ENCODE measurements at regions of chr11 and their contacts with region 1.

Region 1: GRCh38 chr11:18321980-18322711 is at the starts of genes GTF2H1 and HPS5:
- DNase-seq: peak; percentile 84 to 100 (median 97)
- ATAC-seq: peak; percentile 87 to 90
- H3K4me3 Mint-ChIP-seq: peak within 1 kb of the TSS; percentile 93 to 100 (median 99)
- H3K27ac Mint-ChIP-seq: peak within 1 kb of the TSS; percentile 98 to 100 (median 100)
- H3K4me1 Mint-ChIP-seq: peaks cover 37 to 85% (median 79%) of the 10 kb centered on the region in 4 donors
- H3K27me3 Mint-ChIP-seq: no peaks in the 10 kb centered on the region
- polyA plus RNA-seq, gene GTF2H1: 29.0 to 34.3 (median 29.0) TPM
- polyA plus RNA-seq, gene HPS5: 11.6 to 12.2 (median 11.7) TPM

Region 2: DNA sequence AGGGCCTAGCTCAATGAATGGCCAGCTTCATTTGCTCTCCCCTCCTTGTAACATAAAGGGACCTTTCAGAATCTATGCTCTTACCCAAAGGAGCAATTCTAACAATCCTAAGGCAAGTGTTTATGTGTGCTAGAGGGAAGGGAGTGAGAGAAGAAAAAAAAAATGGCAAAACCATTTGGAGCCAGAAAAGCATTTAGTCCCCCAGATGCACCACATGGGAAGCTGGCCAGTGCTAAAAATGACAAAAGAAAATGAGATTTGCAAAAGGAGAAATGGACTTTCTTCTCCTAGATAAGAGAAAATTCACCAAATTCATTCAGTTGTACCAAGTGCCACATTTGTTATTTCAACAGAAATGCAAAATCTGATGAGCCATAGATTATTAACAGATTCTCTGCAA is 362.1 kb before region 1 on chr11:
- POLR2A ChIA-PET with region 1: no interaction called
- DNase-seq: no peak
- ATAC-seq: no peak
- H3K4me3 Mint-ChIP-seq: no peak overlapping the region
- H3K27ac Mint-ChIP-seq: no peak overlapping the region
- H3K4me1 Mint-ChIP-seq: peaks cover 0 to 6% (median 0%) of the 10 kb centered on the region in 4 donors
- H3K27me3 Mint-ChIP-seq: no peaks in the 10 kb centered on the region

Region 3: DNA sequence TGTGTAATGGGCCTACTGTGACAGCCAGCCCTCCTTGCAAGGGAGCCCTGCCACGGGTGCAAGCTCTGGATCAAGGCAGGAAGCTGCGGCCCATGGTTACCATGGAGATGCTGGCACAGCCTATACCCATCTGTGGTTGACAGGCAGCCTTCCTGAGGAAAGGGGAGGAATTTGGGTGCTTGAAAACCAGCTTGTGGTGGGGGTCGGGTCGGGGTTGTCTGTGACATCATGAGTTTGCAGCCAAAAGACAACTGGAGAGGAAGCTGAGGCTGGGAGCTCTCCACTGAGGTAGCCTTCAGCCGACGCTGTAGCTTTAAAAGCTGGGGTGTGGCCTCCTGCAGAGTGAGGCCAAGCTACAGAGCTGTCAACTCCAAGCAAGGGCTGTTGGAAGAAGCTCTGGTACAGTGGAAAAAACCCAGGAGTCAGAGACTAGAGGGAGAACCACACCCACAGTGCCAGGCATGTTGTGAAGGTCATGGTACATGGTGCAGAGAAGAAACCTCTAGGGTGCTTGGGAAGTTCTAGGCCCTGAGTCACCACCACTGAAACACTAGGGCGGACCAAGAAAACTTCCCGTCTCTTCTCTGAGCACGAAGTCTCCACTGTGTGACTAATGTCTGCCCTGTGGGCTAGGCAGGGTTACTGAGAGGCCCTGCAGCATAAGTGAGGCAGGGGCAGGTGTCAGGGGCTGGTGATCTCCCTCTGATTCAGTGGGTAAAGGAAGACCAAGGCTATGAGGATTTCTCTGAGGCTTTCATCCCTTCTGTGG is 61.4 kb after region 1 on chr11:
- POLR2A ChIA-PET with region 1: interaction called, 16 read pairs
- DNase-seq: peak in 9 of 10 donors; percentile 40 to 79 (median 63)
- ATAC-seq: peak; percentile 79 to 81
- H3K4me3 Mint-ChIP-seq: peak overlapping the region; percentile 47 to 90 (median 76)
- H3K27ac Mint-ChIP-seq: peak overlapping the region; percentile 92 to 100 (median 98)
- H3K4me1 Mint-ChIP-seq: peaks cover 24 to 38% (median 34%) of the 10 kb centered on the region in 4 donors
- H3K27me3 Mint-ChIP-seq: no peaks in the 10 kb centered on the region

Region 4: DNA sequence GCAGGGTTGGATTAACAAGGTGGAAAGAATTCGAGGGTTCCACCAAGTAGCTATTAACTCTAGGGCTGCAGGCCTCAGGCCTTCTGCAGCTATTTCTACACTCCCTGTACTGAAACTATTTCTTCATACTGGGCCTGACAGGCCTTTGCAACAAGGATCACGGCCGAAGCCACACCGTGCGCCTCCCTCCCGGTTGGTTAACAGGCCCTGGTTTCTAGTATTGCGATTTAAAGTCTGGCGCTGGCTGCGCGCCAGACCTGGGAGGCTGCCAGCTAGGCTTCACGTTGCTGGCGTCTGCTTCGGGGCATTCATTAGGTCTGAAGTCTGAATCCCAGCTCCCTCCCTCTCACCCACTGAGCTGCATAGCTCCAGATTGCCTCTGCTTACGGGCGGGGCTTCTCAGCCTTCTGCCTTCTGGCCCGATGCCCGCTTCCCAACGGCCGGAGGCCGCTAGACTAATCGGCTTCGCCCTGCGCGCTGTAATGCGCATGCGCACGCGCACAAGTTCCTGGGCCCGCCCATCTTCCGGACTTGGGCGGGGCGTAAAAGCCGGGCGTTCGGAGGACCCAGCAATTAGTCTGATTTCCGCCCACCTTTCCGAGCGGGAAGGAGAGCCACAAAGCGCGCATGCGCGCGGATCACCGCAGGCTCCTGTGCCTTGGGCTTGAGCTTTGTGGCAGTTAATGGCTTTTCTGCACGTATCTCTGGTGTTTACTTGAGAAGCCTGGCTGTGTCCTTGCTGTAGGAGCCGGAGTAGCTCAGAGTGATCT is 73.8 kb after region 1 on chr11:
- POLR2A ChIA-PET with region 1: interaction called, 88 read pairs
- DNase-seq: peak; percentile 84 to 98 (median 94)
- ATAC-seq: peak; percentile 53 to 56
- H3K4me3 Mint-ChIP-seq: peak overlapping the region; percentile 94 to 99 (median 98)
- H3K27ac Mint-ChIP-seq: peak overlapping the region; percentile 88 to 99 (median 98)
- H3K4me1 Mint-ChIP-seq: peaks cover 9 to 45% (median 35%) of the 10 kb centered on the region in 4 donors
- H3K27me3 Mint-ChIP-seq: no peaks in the 10 kb centered on the region